Activated T-helper 2 cell treated with anti-CD3 and anti-CD28 coated beads, Interferon-gamma antibody, Interleukin-2, Interleukin-4, amounts not matched to agents 10 μg/mL and 5 μg/mL and 100 μg/mL, durations not matched to agents 14 hours and 24 hours and 36 hours (primary cell): ENCODE measurements at regions of chr18 and their contacts with region 1.

Region 1: DNA sequence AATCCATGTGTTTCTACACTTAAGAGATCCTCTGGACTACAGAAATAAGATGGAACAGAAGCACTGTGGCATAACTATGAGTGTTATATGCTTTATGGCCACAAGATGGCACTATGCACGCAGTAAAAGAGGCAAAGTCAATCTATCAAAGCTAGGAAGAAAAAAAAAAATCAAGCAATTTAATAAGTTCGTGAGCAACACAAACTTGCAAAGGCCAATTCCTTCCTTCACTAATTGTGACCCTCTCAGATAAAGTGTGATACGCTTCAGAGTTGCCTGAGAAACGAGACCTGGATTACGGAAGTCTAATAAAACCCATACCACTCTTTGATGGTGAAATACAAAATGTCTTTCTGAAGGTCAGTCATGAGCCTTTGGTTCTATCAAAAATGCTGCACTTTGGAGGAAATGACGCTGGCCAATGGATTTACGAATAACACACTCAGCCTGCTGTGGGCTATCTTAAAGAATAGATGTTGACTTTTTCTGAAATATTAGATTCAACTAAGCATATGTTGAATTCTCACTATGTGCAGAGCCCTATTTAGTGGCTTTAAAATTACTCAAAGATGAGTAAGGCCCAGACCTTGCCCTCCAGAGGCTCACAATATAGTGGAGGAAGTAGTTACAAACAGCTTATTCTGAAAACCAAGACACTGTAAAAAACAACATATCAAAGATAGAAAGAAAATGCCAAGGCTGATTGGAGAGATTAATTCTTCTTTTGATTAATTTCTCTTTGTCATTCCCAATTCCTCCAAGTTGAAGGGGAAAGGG is 35.5 kb upstream of the TTR start:
- DNase-seq: no peak
- H3K4me3 Mint-ChIP-seq: no peak overlapping the region
- H3K27ac Mint-ChIP-seq: no peak overlapping the region
- H3K4me1 Mint-ChIP-seq: no peaks in the 10 kb centered on the region
- H3K27me3 Mint-ChIP-seq: peaks cover 7% of the 10 kb centered on the region

Region 2: GRCh38 chr18:31512203-31512764 is 43.9 kb before region 1 on chr18:
- intact Hi-C with region 1: no loop called
- DNase-seq: no peak
- H3K4me3 Mint-ChIP-seq: no peak overlapping the region
- H3K27ac Mint-ChIP-seq: no peak overlapping the region
- H3K4me1 Mint-ChIP-seq: no peaks in the 10 kb centered on the region
- H3K27me3 Mint-ChIP-seq: peaks cover 2% of the 10 kb centered on the region

Region 3: DNA sequence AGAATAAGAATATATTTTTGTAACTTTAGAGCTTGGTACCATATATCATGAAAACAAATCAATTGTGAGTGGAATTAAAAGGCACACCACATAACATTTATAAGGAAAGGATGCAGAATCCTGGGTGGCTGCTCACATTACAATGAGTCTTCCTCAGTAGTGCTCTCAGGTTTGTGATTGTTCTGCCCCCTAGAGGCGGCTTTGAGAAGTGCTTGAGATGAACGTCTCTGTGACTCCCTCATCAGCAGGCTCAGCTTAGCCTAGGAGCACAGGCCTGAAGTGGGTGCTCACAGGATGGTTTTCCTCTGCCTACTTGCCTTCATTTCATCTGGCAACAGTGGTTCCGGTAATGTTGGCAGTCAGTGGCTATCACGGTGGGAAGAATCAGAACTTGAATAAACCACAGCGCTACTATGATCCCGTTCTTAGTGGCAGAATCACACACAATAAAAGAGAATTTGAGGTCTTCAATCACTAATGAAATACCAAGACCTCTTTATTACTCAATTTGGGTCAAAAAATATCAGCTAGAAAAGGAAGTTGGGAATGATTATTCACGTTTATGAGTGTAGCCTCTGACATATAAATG is 166.3 kb after region 1 on chr18:
- intact Hi-C with region 1: loop called (anchors 1 kb)
- DNase-seq: peak; percentile 63
- H3K4me3 Mint-ChIP-seq: no peak overlapping the region
- H3K27ac Mint-ChIP-seq: no peak overlapping the region
- H3K4me1 Mint-ChIP-seq: peaks cover 4% of the 10 kb centered on the region
- H3K27me3 Mint-ChIP-seq: peaks cover 30% of the 10 kb centered on the region

Region 4: GRCh38 chr18:31819106-31819924 is 263.2 kb after region 1 on chr18:
- intact Hi-C with region 1: loop called (anchors 5 kb)
- DNase-seq: no peak
- H3K4me3 Mint-ChIP-seq: no peak overlapping the region
- H3K27ac Mint-ChIP-seq: no peak overlapping the region
- H3K4me1 Mint-ChIP-seq: no peaks in the 10 kb centered on the region
- H3K27me3 Mint-ChIP-seq: peaks cover 8% of the 10 kb centered on the region